Left ventricle myocardium superior (tissue), 1 donor: ENCODE measurements at regions of chr4 and their contacts with region 1.

Region 1: DNA sequence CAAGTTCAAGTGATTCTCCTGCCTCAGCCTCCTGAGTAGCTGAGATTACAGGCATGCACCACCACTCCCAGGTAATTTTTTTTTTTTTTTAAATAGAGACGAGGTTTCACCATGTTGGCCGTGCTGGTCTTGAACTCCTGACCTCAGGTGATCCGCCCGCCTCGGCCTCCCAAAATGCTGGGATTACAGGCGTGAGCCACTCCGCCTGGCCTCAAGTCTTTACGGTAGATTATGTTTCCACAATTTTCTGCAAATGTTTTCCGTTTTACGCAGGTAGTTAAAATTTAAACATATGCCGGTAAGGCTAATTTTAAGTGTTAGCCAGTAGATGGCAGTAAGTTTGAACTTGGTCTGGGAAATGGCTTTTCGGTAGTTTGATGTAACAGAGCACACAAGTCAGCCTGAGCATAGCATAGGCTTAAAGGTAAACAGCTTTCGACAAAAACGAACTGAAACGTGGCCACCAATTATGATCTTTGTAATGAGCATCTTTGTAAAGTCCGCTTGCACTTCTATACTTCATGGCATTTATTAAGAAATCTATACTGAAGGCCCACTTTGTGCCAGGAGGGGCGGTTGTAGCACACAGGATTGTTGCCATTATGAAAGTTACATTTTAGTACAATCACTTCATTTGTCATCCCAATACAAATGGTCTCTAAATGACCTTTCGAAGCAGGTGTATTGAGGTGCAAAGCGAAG is 31.1 kb downstream of the CCKAR start:
- DNase-seq: no peak
- ATAC-seq: peak; percentile 43

Region 2: GRCh38 chr4:26719954-26720552 is 260.8 kb after region 1 on chr4:
- intact Hi-C with region 1: loop called (anchors 10 kb)
- DNase-seq: no peak
- ATAC-seq: no peak

Region 3: GRCh38 chr4:27010334-27010940 is 551.2 kb after region 1 on chr4:
- intact Hi-C with region 1: loop called (anchors 5 kb)
- DNase-seq: peak; percentile 53
- ATAC-seq: peak; percentile 73